A673 (cell line): ENCODE measurements at regions of chr12 and their contacts with region 1.

Region 1: DNA sequence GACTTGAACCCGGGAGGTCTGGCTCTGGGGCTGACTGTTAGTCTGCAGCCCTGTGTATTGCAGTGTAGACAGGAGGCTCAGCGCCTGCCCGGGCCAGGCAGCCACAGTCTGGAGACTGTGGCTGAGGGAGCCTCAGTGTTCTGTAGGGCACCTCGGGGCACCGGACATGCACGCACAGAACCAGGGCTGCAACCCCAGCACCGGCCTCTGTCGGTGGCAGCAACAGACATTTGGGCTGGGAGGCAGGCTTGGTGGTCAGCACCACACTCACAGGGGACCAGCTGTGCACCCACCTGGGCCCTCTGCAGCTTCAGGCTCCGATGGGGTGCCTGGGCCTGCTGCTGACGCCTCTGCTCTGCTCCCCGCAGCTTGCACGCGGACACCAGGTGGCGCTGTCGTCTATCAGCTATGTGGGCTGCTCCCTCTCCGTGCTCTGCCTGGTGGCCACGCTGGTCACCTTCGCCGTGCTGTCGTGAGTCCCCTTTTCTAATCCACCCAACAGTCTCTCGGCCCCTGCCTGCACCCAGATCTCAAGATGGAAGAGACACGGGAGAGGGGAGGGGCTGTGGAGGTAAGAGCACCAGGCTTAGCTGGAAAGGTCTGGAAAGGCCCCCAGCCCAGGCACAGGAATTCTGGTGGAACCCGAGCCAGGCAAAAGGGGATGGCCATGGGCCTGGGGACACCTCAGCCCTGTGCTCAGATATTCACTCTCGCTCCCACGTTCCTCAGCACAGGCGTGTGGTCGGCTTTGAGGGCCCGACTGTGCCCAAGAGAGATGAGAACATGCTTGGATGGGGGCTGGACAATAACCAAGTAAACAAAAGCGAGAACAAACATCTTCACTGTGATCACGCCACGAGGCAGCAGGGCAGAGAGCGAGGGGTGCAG is 151.0 kb downstream of the ADGRD1 start:
- DNase-seq: peak; percentile 83
- H3K4me3 ChIP-seq: no peak overlapping the region
- H3K27ac ChIP-seq: no peak overlapping the region
- H3K4me1 ChIP-seq: no peaks in the 10 kb centered on the region
- H3K27me3 ChIP-seq: no peaks in the 10 kb centered on the region
- CTCF ChIP-seq: peak; percentile 95

Region 2: DNA sequence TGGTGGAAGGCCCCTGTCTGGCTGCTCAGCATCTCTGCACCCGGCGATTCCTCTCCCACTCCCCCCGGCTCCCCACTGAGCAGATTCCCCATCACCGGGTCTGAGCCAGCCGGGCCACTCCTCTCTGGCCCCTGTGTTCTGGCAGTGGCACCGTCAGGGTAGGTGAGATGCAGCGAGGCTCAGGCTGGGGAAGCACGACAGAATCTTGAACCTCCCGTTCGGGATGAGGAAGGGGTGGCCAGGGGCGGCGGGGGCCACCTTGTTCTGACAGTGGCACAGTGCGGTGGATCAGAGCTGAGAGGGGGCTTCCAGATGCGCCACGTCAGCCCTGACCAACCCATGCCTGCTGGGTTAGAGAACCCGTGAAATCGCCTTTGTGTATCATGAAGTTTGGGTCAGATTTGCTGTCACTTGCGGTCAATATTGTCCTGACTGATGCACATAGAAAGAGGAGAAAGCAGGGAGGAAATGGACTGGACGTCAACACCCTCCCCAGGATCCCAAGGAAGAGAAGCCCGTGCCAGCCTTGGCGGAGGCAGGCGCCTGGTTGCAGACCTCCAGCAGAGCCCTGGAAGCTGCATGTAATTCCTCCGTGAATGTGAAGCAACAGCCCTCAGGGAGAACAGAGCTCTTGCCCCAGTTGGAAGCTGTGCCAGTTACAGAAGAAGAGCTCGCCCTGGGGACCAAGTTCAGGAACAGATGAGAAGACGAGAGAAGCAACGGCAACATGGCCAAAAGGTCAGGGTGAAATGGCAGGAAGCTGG is 469.1 kb after region 1 on chr12:
- CTCF ChIA-PET with region 1: no interaction called
- POLR2A ChIA-PET with region 1: no interaction called
- intact Hi-C with region 1: loop called (anchors 10 kb)
- DNase-seq: no peak
- H3K4me3 ChIP-seq: no peak overlapping the region
- H3K27ac ChIP-seq: no peak overlapping the region
- H3K4me1 ChIP-seq: no peaks in the 10 kb centered on the region
- H3K27me3 ChIP-seq: peaks cover 68% of the 10 kb centered on the region
- CTCF ChIP-seq: no peak